ENCODE measurements at regions of chr11 and their contacts with region 1.

Region 1: GRCh38 chr11:61091373-61092279 is 10.7 kb upstream of the CD5 start:
- DNase-seq: no peak
- ATAC-seq: peak; percentile 12
- H3K4me3 Mint-ChIP-seq: peak overlapping the region; percentile 65
- H3K27ac Mint-ChIP-seq: peak overlapping the region; percentile 90
- H3K4me1 Mint-ChIP-seq: peaks cover 55% of the 10 kb centered on the region
- H3K27me3 Mint-ChIP-seq: no peaks in the 10 kb centered on the region

Region 2: GRCh38 chr11:61102667-61103571 is 11.3 kb after region 1 on chr11:
- CTCF ChIA-PET with region 1: interaction called, 3 read pairs
- POLR2A ChIA-PET with region 1: interaction called, 29 read pairs
- DNase-seq: peak; percentile 50
- ATAC-seq: peak; percentile 38
- H3K4me3 Mint-ChIP-seq: no peak overlapping the region
- H3K27ac Mint-ChIP-seq: no peak overlapping the region
- H3K4me1 Mint-ChIP-seq: peaks cover 41% of the 10 kb centered on the region
- H3K27me3 Mint-ChIP-seq: no peaks in the 10 kb centered on the region